AG04449 (cell line): ENCODE measurements at regions of chr13 and their contacts with region 1.

Region 1: GRCh38 chr13:95644601-95645052 is at the start of gene DZIP1:
- DNase-seq: no peak
- H3K4me3 ChIP-seq: peak within 1 kb of the TSS; percentile 70
- CTCF ChIP-seq: no peak

Region 2: DNA sequence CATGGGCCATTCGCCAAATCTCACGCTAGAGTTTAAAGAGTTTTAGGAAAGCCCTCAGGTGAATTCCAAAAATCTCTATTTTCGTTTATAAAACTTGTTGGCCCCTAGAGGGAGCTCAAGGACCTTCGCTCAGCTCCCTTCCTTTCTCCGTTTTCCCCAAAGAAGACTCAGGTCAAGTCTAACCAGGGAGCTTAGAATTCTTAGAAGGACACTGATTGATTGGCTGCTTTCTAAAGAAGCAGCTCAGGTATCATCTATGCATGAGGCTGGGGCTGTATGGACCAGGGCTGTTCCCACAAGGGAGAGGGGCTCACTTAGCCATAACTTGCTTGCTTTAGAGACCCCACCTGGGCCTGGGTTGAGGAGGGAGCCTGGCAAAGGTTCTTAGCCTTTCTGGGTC is 20.6 kb before region 1 on chr13:
- CTCF ChIA-PET with region 1: interaction called, 16 read pairs
- POLR2A ChIA-PET with region 1: interaction called, 4 read pairs
- DNase-seq: no peak
- H3K4me3 ChIP-seq: no peak overlapping the region
- CTCF ChIP-seq: peak; percentile 53

Region 3: DNA sequence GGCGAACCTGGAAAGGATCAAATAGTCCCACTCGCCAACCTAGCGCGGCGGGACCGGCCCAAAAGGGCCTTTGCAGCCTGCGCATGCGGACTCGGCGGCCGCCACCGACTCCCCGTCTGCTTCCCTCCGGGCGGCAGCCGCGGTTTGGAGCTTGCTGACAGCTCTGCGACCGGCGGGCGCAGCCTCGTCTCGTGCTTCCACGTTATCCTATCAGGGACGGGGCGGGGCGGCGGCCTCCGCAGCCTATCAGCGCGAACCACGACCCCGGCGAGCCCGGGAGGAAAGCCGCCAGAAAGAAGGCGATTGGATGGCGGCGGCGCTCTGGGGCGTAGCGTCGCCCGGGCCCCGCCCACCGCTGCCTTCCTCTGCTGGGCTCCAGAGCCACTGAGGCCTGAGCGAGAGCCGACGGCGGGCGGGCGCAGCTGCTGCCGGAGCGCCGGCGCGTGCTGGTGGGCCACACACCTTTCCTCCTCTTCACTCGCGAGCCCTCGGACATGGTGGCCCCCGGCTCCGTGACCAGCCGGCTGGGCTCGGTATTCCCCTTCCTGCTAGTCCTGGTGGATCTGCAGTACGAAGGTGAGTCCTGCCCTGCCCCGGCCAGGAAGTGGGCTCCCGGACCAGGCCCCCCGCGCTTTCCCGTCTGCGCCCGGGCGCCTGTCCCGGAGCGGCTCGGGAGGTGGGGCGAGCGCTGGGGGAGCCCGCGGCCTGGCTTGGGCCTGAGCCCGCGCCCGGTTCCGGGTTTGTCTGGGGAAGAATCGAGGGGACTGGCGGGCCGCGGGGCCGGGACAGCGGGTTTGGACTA is 32.3 kb after region 1 on chr13 and contains the start of gene DNAJC3:
- CTCF ChIA-PET with region 1: interaction called, 6 read pairs
- POLR2A ChIA-PET with region 1: interaction called, 13 read pairs
- DNase-seq: peak; percentile 78
- H3K4me3 ChIP-seq: peak within 1 kb of the TSS; percentile 90
- CTCF ChIP-seq: no peak